Activated naive CD4-positive, alpha-beta T cell treated with anti-CD3 and anti-CD28 coated beads for 36 hours (primary cell): ENCODE measurements at regions of chr18 and their contacts with region 1.

Region 1: GRCh38 chr18:51197661-51198424 is at the start of gene MEX3C:
- DNase-seq: peak; percentile 100
- H3K4me3 Mint-ChIP-seq: peak within 1 kb of the TSS; percentile 88
- H3K27ac Mint-ChIP-seq: peak within 1 kb of the TSS; percentile 98
- H3K4me1 Mint-ChIP-seq: peaks cover 19% of the 10 kb centered on the region
- H3K27me3 Mint-ChIP-seq: no peaks in the 10 kb centered on the region
- total RNA-seq, gene MEX3C: 50.9 to 52.4 TPM

Region 2: GRCh38 chr18:50281295-50281971 is 916.4 kb before region 1 on chr18 and contains the start of gene MBD1:
- CTCF ChIA-PET with region 1: no interaction called
- intact Hi-C with region 1: loop called (anchors 1 kb)
- DNase-seq: peak; percentile 96
- H3K4me3 Mint-ChIP-seq: peak within 1 kb of the TSS; percentile 97
- H3K27ac Mint-ChIP-seq: peak within 1 kb of the TSS; percentile 84
- H3K4me1 Mint-ChIP-seq: peaks cover 36% of the 10 kb centered on the region
- H3K27me3 Mint-ChIP-seq: no peaks in the 10 kb centered on the region
- total RNA-seq, gene MBD1: 66.4 to 69.0 TPM

Region 3: GRCh38 chr18:50878345-50879301 is 319.2 kb before region 1 on chr18 and contains the start of gene ME2:
- CTCF ChIA-PET with region 1: no interaction called
- intact Hi-C with region 1: loop called (anchors 1 kb)
- DNase-seq: peak; percentile 90
- H3K4me3 Mint-ChIP-seq: peak within 1 kb of the TSS; percentile 98
- H3K27ac Mint-ChIP-seq: peak within 1 kb of the TSS; percentile 99
- H3K4me1 Mint-ChIP-seq: peaks cover 27% of the 10 kb centered on the region
- H3K27me3 Mint-ChIP-seq: peaks cover 3% of the 10 kb centered on the region
- total RNA-seq, gene ME2: 137 to 146 TPM

Region 4: GRCh38 chr18:51029694-51030536 is 167.9 kb before region 1 on chr18 and contains the start of gene SMAD4:
- CTCF ChIA-PET with region 1: no interaction called
- intact Hi-C with region 1: loop called (anchors 1 kb)
- DNase-seq: peak; percentile 98
- H3K4me3 Mint-ChIP-seq: peak within 1 kb of the TSS; percentile 98
- H3K27ac Mint-ChIP-seq: peak within 1 kb of the TSS; percentile 97
- H3K4me1 Mint-ChIP-seq: peaks cover 45% of the 10 kb centered on the region
- H3K27me3 Mint-ChIP-seq: no peaks in the 10 kb centered on the region
- total RNA-seq, gene SMAD4: 72.0 to 75.1 TPM

Region 5: DNA sequence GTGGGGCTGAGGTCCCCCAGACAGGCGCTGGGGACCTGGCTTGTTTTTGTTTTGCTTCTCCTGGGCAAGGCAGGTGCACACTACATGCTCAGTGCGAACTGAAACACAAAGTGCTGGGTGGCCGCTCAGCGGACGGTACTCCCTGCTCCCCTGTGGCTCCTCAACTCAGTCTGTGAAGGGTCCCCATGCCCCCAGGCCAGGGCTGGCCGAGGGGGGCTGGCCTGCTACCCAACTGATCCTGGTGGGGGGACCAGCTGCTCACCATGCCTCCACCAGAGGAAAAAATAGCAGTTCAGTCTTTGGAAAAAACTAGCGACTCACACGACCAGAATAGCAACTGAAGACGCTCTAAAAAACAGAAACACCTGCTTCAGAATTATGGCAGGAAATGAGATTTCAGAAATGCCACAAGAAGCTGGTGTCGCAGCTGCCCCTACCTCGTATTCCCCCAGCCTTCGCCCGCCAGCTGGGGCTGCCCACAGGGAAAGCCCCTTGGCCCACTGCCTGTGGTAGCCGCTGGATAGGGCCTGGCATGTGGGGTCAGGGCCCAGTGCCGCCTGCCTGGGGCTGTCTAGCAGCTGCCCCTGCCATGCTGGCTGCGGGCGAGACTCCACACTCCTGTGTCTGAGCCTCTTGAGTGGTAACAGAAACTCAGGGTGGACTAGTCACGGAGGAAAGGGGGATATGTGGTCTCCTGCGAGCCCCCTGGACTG is 44.0 kb before region 1 on chr18:
- CTCF ChIA-PET with region 1: interaction called, 19 read pairs
- intact Hi-C with region 1: loop called (anchors 1 kb)
- DNase-seq: peak; percentile 70
- H3K4me3 Mint-ChIP-seq: peak overlapping the region; percentile 79
- H3K27ac Mint-ChIP-seq: peak overlapping the region; percentile 99
- H3K4me1 Mint-ChIP-seq: peaks cover 58% of the 10 kb centered on the region
- H3K27me3 Mint-ChIP-seq: no peaks in the 10 kb centered on the region

Region 6: GRCh38 chr18:51211552-51211951 is 13.7 kb after region 1 on chr18:
- CTCF ChIA-PET with region 1: no interaction called
- intact Hi-C with region 1: loop called (anchors 2 kb)
- DNase-seq: peak; percentile 71
- H3K4me3 Mint-ChIP-seq: no peak overlapping the region
- H3K27ac Mint-ChIP-seq: no peak overlapping the region
- H3K4me1 Mint-ChIP-seq: peaks cover 13% of the 10 kb centered on the region
- H3K27me3 Mint-ChIP-seq: no peaks in the 10 kb centered on the region